ENCODE measurements at regions of chr3 and their contacts with region 1.

Region 1: DNA sequence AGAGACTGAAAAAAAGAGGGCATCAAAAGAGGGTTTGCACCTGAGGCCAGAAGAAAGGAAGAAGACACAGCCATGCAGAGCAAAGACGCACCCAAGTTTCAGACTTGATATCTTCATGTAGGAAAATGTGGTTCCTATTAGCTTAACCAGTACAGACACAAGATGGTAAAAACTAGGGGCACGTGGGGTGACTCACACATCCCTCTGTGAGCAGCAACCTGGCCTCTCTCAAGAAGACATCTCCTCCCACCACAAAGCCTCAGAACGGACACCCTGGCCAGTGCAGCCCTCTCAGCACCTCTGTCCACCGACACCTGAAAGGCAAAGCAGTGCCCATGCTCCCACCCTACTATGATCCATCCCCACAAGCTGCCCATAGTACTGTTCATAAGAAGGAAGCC is 33.3 kb downstream of the GLB1 start:
- DNase-seq: peak; percentile 86
- H3K4me3 Mint-ChIP-seq: no peak overlapping the region
- H3K27ac Mint-ChIP-seq: peak overlapping the region; percentile 93
- H3K4me1 Mint-ChIP-seq: peaks cover 57% of the 10 kb centered on the region
- H3K27me3 Mint-ChIP-seq: no peaks in the 10 kb centered on the region

Region 2: DNA sequence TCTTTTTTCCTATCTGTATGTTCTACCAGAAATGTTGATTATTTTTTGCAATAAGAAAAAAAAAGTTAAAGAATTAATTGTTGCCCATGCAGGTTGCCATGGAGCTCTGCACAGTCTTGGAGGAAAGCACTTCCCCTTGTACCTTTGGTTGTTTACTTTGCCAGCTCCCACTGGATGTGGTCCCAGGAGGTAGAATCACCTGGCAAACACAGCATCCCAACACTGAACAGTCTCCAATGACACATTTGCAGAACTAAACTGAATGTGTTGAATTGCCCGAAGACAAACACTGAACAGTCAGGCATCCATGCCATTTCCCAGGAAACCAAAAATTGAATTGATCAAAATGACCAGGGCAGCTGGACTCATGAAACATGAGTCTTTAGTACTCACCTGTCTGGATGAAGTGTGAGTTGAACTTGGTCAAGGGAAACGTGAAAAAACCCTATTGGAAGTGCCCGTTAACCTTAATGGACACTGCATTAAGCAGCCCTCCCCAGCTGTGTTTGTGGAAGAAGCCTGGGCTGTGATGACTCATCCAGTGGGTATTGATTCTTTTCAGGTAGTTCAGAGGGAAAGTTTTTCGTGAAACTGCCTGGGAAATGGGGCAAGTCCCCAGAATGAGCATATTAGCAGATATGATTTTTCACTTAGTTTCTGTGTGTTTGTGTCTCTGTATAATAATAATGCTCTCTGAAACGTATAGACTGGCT is 1815.6 kb before region 1 on chr3:
- CTCF ChIA-PET with region 1: no interaction called
- intact Hi-C with region 1: loop called (anchors 5 kb)
- DNase-seq: peak; percentile 73
- H3K4me3 Mint-ChIP-seq: no peak overlapping the region
- H3K27ac Mint-ChIP-seq: no peak overlapping the region
- H3K4me1 Mint-ChIP-seq: peaks cover 53% of the 10 kb centered on the region
- H3K27me3 Mint-ChIP-seq: peaks cover 4% of the 10 kb centered on the region

Region 3: GRCh38 chr3:32684800-32685542 is 378.7 kb before region 1 on chr3 and contains the start of gene CNOT10:
- CTCF ChIA-PET with region 1: no interaction called
- intact Hi-C with region 1: loop called (anchors 1 kb)
- DNase-seq: peak; percentile 97
- H3K4me3 Mint-ChIP-seq: peak within 1 kb of the TSS; percentile 90
- H3K27ac Mint-ChIP-seq: peak within 1 kb of the TSS; percentile 86
- H3K4me1 Mint-ChIP-seq: peaks cover 32% of the 10 kb centered on the region
- H3K27me3 Mint-ChIP-seq: no peaks in the 10 kb centered on the region
- total RNA-seq, gene CNOT10: 40.6 to 46.5 TPM

Region 4: GRCh38 chr3:32960404-32961170 is 103.1 kb before region 1 on chr3:
- CTCF ChIA-PET with region 1: interaction called, 6 read pairs
- intact Hi-C with region 1: loop called (anchors 1 kb)
- DNase-seq: no peak
- H3K4me3 Mint-ChIP-seq: no peak overlapping the region
- H3K27ac Mint-ChIP-seq: peak overlapping the region; percentile 75
- H3K4me1 Mint-ChIP-seq: peaks cover 61% of the 10 kb centered on the region
- H3K27me3 Mint-ChIP-seq: no peaks in the 10 kb centered on the region

Region 5: DNA sequence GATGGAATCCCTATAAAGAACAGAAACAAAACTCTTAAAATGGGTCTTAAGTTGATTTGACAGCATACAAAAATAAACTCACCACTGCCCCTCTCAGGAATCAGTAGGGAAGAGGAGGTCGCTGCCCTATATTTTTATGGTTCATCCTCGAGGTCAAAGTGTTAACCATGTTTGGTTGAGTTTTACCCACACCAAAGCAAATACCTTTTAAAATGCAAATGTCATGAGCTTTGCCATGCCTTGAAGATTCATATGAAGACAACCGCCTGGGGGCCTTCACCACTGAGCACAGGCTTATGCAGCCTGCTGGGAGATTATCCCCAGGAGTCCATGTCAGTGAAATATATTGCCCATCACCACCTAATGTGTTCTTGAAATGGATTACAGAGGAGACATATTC is 32.8 kb before region 1 on chr3:
- CTCF ChIA-PET with region 1: interaction called, 16 read pairs
- intact Hi-C with region 1: no loop called
- DNase-seq: peak; percentile 56
- H3K4me3 Mint-ChIP-seq: no peak overlapping the region
- H3K27ac Mint-ChIP-seq: no peak overlapping the region
- H3K4me1 Mint-ChIP-seq: peaks cover 15% of the 10 kb centered on the region
- H3K27me3 Mint-ChIP-seq: no peaks in the 10 kb centered on the region

Region 6: DNA sequence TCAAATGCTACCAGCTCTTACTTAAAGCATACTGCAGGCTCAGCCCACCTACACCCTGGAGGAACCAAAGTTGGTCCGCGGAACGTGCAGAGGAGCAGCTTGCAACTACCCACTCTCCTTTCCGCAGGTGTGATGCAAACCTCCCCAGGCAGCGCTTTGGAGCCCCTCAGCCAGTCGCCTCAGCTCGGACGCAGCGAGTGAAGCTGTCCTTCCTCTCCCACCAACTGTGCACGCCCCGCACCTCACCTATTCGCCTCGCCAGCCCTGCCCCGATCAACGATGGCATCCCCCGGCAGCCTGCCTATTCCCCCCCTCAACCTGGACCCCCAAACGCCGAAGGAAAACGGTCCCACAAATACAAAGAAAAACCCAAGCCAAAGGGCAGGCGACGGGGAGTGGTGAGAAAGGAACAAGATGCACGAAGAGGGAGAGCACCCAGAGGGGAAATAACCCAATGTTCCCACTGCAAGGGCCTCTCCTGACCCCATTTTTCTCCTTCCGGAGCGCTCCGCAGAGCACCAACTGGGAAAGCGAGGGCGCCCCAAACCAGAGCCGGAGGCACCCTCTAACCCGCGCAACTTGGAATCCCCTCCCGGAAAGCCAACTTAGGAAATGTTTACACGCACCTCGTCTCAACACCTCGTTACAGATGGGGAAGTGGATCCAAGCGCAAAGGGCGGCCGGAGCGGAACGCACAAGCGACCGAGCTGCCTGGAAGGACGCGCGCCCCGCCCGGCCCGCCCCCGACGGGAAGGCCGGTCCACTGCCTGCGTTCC is 32.6 kb after region 1 on chr3:
- CTCF ChIA-PET with region 1: interaction called, 7 read pairs
- intact Hi-C with region 1: loop called (anchors 1 kb)
- DNase-seq: peak; percentile 68
- H3K4me3 Mint-ChIP-seq: peak overlapping the region; percentile 98
- H3K27ac Mint-ChIP-seq: peak overlapping the region; percentile 88
- H3K4me1 Mint-ChIP-seq: peaks cover 41% of the 10 kb centered on the region
- H3K27me3 Mint-ChIP-seq: no peaks in the 10 kb centered on the region

Region 7: GRCh38 chr3:33440323-33441232 is 376.9 kb after region 1 on chr3 and contains the start of gene UBP1:
- CTCF ChIA-PET with region 1: no interaction called
- intact Hi-C with region 1: loop called (anchors 1 kb)
- DNase-seq: peak; percentile 99
- H3K4me3 Mint-ChIP-seq: peak within 1 kb of the TSS; percentile 99
- H3K27ac Mint-ChIP-seq: peak within 1 kb of the TSS; percentile 100
- H3K4me1 Mint-ChIP-seq: peaks cover 34% of the 10 kb centered on the region
- H3K27me3 Mint-ChIP-seq: no peaks in the 10 kb centered on the region
- total RNA-seq, gene UBP1: 42.8 to 44.0 TPM

Measured in activated naive CD4-positive, alpha-beta T cell treated with anti-CD3 and anti-CD28 coated beads for 36 hours (primary cell).